CD4-positive, alpha-beta memory T cell (primary cell): ENCODE measurements at regions of chr3 and their contacts with region 1.

Region 1: DNA sequence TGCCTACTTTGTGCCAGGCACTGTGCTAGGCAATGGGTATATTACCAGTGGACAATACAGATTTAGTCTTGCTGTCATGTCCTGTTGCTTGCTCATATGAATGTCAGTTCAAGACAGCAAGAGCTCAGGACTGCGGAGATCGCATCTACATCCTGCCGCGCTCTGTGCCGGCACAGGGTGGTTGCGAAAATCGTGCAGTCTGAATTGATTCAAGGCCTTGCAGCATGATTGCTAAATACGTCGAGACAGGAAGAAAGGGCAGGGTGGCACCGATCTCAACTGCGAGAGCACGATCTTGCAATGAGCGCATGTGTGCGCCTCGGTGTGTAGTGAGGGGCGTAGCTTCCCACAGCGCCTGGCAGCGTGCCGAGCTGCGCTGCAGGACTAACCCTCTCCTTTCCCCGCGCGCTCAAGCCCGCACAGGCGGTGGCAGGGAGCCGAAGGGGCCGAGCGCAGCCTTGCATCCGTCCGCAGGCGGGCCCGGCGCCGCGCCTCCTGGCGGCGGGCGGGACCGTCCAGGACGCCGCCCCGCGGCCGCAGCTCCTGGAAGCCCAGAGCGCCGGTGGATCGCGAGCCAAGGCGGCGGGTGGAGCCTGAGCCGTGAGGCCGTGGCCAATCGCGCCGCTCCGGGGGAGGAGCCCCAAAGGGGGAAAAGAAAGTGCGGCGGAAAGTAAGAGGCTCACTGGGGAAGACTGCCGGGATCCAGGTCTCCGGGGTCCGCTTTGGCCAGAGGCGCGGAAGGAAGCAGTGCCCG is at the start of gene IL1RAP:
- DNase-seq: peak; percentile 89 to 91 (median 90)
- H3K4me3 ChIP-seq: peak within 1 kb of the TSS; percentile 76 to 92
- H3K4me3 Mint-ChIP-seq: peak within 1 kb of the TSS; percentile 84 to 97 (median 94)
- H3K27ac ChIP-seq: peak within 1 kb of the TSS; percentile 51
- H3K27ac Mint-ChIP-seq: peak within 1 kb of the TSS in 6 of 7 donors; percentile 92 to 97 (median 94)
- H3K4me1 ChIP-seq: peaks cover 28% of the 10 kb centered on the region
- H3K4me1 Mint-ChIP-seq: peaks cover 25 to 43% (median 35%) of the 10 kb centered on the region in 4 donors
- H3K27me3 ChIP-seq: no peaks in the 10 kb centered on the region
- H3K27me3 Mint-ChIP-seq: no peaks in the 10 kb centered on the region
- total RNA-seq, gene IL1RAP: 11.0 to 14.6 TPM

Region 2: DNA sequence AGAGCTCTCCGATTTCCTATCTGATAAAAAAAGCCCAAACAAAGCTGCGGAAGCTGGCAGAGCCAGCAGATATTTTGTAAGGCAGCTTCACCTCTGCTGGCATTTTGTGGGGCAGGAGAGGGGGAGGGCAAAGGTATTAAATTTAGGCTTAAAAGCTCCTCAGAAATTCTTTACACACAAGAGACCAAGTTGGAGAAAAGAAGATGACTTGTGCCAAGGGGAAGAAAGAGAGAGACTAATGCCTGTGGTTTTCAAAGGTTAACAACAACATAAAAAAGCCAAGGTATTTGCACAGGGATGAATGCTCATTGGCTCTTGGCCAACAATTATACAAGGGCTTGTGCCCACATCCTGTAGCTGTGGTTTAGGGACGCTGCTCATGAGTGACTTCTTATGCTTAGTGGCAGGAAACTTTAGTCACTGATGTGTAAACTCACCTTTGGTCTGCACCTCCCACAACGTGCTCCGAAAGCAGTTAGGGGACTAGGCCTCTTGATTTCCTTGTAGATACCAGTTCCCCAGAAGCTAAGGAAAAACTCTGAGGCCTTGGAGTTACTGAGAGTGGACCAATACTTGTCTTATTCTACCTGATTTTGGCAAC is 1188.9 kb before region 1 on chr3:
- CTCF ChIA-PET with region 1: no interaction called
- POLR2A ChIA-PET with region 1: no interaction called
- intact Hi-C with region 1: loop called (anchors 10 kb)
- DNase-seq: peak; percentile 89 to 94 (median 93)
- H3K4me3 ChIP-seq: peak overlapping the region in 1 of 2 donors; percentile 6
- H3K4me3 Mint-ChIP-seq: peak overlapping the region; percentile 75 to 90 (median 84)
- H3K27ac ChIP-seq: peak overlapping the region; percentile 31
- H3K27ac Mint-ChIP-seq: peak overlapping the region; percentile 91 to 97 (median 96)
- H3K4me1 ChIP-seq: peaks cover 59% of the 10 kb centered on the region
- H3K4me1 Mint-ChIP-seq: peaks cover 43 to 66% (median 48%) of the 10 kb centered on the region in 4 donors
- H3K27me3 ChIP-seq: no peaks in the 10 kb centered on the region
- H3K27me3 Mint-ChIP-seq: no peaks in the 10 kb centered on the region

Region 3: DNA sequence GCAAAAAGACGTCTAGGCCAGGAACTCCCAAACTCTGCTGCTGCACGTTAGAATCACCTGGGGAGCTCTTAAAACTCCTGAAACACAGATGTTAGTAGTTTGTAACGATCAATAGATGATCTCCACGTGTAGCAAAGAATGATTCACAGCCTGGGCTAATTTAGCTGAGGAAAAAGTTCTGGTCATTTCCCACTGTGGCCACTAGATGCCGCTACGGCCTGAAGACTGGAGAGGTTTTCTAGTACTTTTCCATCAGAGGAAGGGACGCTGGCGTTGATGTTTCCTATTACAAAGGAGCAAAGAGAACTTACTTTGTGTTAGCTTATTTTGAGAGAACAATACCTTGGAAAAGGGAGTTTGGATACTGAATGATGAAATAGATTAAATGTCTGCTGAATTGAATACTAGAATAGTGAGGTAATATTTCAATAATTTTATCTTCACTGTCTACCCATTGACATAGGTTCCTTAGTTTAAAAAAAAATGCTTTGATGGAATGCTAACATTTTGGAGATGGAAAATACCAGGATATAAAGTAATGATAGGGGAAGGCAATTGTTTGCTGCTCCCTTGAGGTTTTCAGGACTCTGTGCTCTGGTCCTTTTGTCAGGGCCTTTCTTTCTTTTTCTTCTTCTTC is 551.9 kb before region 1 on chr3:
- CTCF ChIA-PET with region 1: no interaction called
- POLR2A ChIA-PET with region 1: no interaction called
- intact Hi-C with region 1: loop called (anchors 1 kb)
- DNase-seq: peak; percentile 40 to 53 (median 50)
- H3K4me3 ChIP-seq: no peak overlapping the region
- H3K4me3 Mint-ChIP-seq: no peak overlapping the region
- H3K27ac ChIP-seq: no peak overlapping the region
- H3K27ac Mint-ChIP-seq: no peak overlapping the region
- H3K4me1 ChIP-seq: peaks cover 6% of the 10 kb centered on the region
- H3K4me1 Mint-ChIP-seq: peaks cover 2 to 8% (median 5%) of the 10 kb centered on the region in 4 donors
- H3K27me3 ChIP-seq: no peaks in the 10 kb centered on the region
- H3K27me3 Mint-ChIP-seq: peaks cover 11 to 14% of the 10 kb centered on the region in 2 donors

Region 4: GRCh38 chr3:190424478-190425439 is 88.8 kb before region 1 on chr3:
- CTCF ChIA-PET with region 1: interaction called, 3 read pairs
- POLR2A ChIA-PET with region 1: interaction called, 3 read pairs
- intact Hi-C with region 1: loop called (anchors 2 kb)
- DNase-seq: peak in 4 of 5 donors; percentile 31 to 44 (median 38)
- H3K4me3 ChIP-seq: no peak overlapping the region
- H3K4me3 Mint-ChIP-seq: peak overlapping the region; percentile 52 to 75 (median 70)
- H3K27ac ChIP-seq: no peak overlapping the region
- H3K27ac Mint-ChIP-seq: peak overlapping the region; percentile 18 to 89 (median 78)
- H3K4me1 ChIP-seq: no peaks in the 10 kb centered on the region
- H3K4me1 Mint-ChIP-seq: peaks cover 6 to 8% (median 7%) of the 10 kb centered on the region in 4 donors
- H3K27me3 ChIP-seq: no peaks in the 10 kb centered on the region
- H3K27me3 Mint-ChIP-seq: no peaks in the 10 kb centered on the region

Region 5: DNA sequence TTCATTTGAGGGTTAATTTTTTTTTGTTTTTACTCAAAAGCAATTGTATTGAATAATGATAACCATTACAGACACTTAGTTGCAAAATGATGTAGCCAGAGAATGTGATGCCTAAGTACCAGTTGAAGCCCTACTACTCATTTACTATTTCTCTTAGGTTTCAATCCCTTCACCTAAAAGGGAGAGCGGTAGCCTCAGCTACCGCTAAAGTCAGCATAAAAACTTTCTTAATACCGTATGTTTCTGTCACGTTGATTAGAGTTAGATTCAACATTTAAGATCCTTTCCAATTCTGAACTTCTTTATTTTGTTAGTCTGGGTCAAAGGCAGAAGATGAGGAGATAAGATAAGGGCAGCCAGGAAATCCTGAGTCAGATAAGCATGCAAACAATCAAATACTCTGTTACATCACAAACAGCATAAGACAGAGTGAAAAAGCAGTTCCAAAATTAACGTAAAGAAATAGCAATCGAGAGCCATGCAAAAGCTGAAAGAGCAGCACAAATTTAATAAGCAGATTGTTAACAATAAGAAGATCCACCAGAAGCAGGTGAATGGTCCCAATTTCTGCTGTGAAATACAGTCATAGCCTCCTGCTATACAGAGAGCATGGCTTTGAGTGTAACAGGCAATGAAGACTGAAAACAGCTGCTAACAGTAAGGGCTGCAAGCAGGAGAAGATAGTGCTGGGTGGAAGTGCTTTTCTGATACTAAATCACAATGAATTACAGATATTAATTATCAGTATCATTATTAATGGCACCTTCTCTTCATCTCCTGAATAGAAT is 66.9 kb before region 1 on chr3:
- CTCF ChIA-PET with region 1: no interaction called
- POLR2A ChIA-PET with region 1: interaction called, 3 read pairs
- intact Hi-C with region 1: loop called (anchors 1 kb)
- DNase-seq: peak in 4 of 5 donors; percentile 5 to 26 (median 16)
- H3K4me3 ChIP-seq: no peak overlapping the region
- H3K4me3 Mint-ChIP-seq: peak overlapping the region; percentile 21 to 81 (median 58)
- H3K27ac ChIP-seq: no peak overlapping the region
- H3K27ac Mint-ChIP-seq: peak overlapping the region in 6 of 7 donors; percentile 8 to 72 (median 50)
- H3K4me1 ChIP-seq: peaks cover 18% of the 10 kb centered on the region
- H3K4me1 Mint-ChIP-seq: peaks cover 10 to 17% (median 13%) of the 10 kb centered on the region in 4 donors
- H3K27me3 ChIP-seq: no peaks in the 10 kb centered on the region
- H3K27me3 Mint-ChIP-seq: no peaks in the 10 kb centered on the region

Region 6: DNA sequence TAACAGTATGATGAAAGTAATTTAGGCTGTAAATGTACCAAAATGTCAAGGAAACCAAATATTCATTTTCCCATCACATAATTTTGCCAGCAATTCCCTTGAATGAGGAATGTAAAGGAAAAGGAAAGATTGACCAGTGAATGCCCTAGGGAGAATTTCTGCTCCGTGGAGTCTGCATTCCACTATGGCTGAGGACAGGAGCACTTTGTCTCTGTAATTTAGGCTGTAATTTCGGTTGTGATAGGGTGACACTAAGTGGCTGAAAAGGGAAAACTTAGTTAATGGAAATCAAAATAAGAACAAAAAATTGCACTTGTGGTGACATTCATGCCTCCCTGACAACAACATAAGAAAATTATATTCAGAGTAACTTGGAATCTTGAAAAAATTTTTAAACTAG is 55.5 kb before region 1 on chr3:
- CTCF ChIA-PET with region 1: no interaction called
- POLR2A ChIA-PET with region 1: no interaction called
- intact Hi-C with region 1: no loop called
- DNase-seq: no peak
- H3K4me3 ChIP-seq: no peak overlapping the region
- H3K4me3 Mint-ChIP-seq: no peak overlapping the region
- H3K27ac ChIP-seq: no peak overlapping the region
- H3K27ac Mint-ChIP-seq: no peak overlapping the region
- H3K4me1 ChIP-seq: no peaks in the 10 kb centered on the region
- H3K4me1 Mint-ChIP-seq: no peaks in the 10 kb centered on the region
- H3K27me3 ChIP-seq: no peaks in the 10 kb centered on the region
- H3K27me3 Mint-ChIP-seq: peaks cover 5% of the 10 kb centered on the region in 2 donors

Region 7: GRCh38 chr3:190497811-190498210 is 15.8 kb before region 1 on chr3:
- CTCF ChIA-PET with region 1: no interaction called
- POLR2A ChIA-PET with region 1: no interaction called
- intact Hi-C with region 1: no loop called
- DNase-seq: no peak
- H3K4me3 ChIP-seq: no peak overlapping the region
- H3K4me3 Mint-ChIP-seq: no peak overlapping the region
- H3K27ac ChIP-seq: no peak overlapping the region
- H3K27ac Mint-ChIP-seq: no peak overlapping the region
- H3K4me1 ChIP-seq: no peaks in the 10 kb centered on the region
- H3K4me1 Mint-ChIP-seq: no peaks in the 10 kb centered on the region
- H3K27me3 ChIP-seq: no peaks in the 10 kb centered on the region
- H3K27me3 Mint-ChIP-seq: peaks cover 24 to 26% of the 10 kb centered on the region in 2 donors